Calu3 (cell line): ENCODE measurements at regions of chr11 and their contacts with region 1.

Region 1: DNA sequence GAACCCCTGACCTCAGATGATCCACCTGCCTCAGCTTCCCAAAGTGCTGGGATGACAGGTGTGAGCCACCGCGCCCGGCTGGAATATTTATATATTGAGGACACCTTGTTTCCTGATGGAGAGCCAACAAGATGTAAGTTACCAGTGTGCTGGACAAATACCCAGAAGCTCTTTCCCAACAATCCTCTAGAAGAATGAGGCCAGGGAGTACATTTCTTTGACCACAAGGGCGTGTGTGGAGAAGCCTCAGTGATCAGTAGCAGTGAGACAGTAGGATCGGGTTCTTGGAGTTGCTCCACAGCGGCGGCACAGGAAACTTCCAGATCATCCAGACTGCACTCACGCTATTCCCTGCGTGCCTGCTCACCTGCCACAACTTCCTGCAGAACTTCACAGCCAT is 10.3 kb upstream of the POLA2 start:
- DNase-seq: no peak
- H3K4me3 Mint-ChIP-seq: no peak overlapping the region
- H3K27ac Mint-ChIP-seq: no peak overlapping the region
- H3K4me1 Mint-ChIP-seq: peaks cover 9% of the 10 kb centered on the region
- H3K27me3 Mint-ChIP-seq: no peaks in the 10 kb centered on the region
- CTCF ChIP-seq: no peak

Region 2: DNA sequence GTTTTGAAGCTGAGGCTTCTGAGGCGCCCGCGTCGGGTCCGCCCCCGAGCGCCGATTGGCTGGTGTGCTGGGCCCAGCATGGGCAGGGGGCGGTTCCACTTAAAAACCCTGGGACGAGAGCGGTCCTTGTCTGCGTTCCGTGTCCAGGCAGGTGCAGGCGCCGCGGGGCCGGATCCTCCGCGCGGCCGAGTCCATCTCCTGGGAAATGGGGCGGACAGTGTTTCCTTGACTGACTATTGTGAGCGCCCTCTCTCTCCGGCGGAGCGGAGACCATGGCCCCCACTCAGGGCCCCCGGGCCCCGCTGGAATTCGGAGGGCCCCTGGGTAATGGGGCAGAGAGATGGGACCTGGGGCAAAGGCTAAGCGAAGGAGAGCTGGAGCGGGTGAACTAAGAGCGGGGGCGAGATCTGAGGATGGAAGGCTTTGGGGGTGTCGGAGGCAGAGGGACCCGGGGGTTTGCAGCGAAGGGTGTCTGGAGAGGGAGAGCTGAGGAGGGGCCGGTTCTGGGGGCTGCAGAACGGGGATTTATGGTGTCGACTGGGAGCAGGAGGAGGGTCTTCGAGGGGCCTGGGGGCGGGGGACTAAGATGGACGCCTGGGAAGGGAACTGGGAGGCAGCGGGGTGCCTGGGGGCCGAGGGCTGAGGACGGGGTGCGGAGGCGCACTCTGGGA is 139.6 kb before region 1 on chr11 and contains the start of gene TM7SF2:
- CTCF ChIA-PET with region 1: no interaction called
- intact Hi-C with region 1: loop called (anchors 2 kb)
- DNase-seq: peak; percentile 97
- H3K4me3 Mint-ChIP-seq: peak within 1 kb of the TSS; percentile 81
- H3K27ac Mint-ChIP-seq: peak within 1 kb of the TSS; percentile 79
- H3K4me1 Mint-ChIP-seq: peaks cover 34% of the 10 kb centered on the region
- H3K27me3 Mint-ChIP-seq: no peaks in the 10 kb centered on the region
- CTCF ChIP-seq: no peak
- total RNA-seq, gene TM7SF2: 41.2 and 42.8 TPM in 2 replicates

Region 3: GRCh38 chr11:65204646-65205601 is 46.6 kb before region 1 on chr11:
- CTCF ChIA-PET with region 1: no interaction called
- intact Hi-C with region 1: loop called (anchors 10 kb)
- DNase-seq: peak; percentile 58
- H3K4me3 Mint-ChIP-seq: no peak overlapping the region
- H3K27ac Mint-ChIP-seq: no peak overlapping the region
- H3K4me1 Mint-ChIP-seq: no peaks in the 10 kb centered on the region
- H3K27me3 Mint-ChIP-seq: no peaks in the 10 kb centered on the region
- CTCF ChIP-seq: peak; percentile 93